Psoas muscle (tissue), 8 donors: ENCODE measurements at regions of chr11 and their contacts with region 1.

Region 1: DNA sequence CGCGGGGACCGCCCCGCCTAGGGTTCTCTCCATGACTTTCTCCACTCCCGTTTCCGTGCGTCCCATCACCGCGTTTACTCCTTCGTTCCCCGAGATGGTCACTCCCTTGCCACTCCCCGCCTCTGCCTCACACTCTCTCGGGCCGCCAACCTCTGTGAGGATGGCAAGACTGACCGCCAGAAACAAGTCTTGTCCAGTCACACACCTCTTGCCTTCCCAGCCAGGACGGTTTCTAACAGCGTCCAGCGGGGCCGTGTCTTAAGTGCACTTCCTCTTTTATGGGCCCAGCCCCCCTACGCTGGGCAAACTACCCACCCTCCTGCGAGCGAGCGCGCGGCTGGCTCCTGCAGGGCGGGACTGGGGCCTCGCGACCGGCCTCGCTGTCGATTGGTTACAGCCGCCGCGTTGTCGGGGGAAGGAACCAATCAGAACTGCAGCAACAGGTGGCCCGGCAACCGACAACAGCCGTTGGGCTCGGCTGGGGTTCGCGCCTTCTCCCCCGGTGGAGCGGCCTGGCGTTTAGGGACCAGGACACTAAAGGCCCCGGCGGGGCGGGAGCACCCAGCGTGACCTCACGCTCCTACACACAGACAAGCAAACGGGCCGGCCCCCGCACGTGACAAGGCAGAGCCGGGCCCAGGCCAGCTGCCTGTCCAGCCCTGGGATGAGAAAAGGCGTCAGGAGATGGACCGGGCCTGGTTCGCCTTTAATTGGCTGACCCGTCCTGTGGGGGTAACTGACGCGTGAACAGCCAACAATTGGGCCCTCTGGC is 512 bp upstream of the UCP2 start:
- DNase-seq: peak; percentile 94 to 96
- ATAC-seq: peak; percentile 88 to 90 (median 89)
- H3K4me3 ChIP-seq: peak overlapping the region; percentile 71
- H3K27ac ChIP-seq: peak overlapping the region; percentile 92
- H3K4me1 ChIP-seq: peaks cover 25% of the 10 kb centered on the region
- H3K27me3 ChIP-seq: no peaks in the 10 kb centered on the region
- CTCF ChIP-seq: no peak

Region 2: DNA sequence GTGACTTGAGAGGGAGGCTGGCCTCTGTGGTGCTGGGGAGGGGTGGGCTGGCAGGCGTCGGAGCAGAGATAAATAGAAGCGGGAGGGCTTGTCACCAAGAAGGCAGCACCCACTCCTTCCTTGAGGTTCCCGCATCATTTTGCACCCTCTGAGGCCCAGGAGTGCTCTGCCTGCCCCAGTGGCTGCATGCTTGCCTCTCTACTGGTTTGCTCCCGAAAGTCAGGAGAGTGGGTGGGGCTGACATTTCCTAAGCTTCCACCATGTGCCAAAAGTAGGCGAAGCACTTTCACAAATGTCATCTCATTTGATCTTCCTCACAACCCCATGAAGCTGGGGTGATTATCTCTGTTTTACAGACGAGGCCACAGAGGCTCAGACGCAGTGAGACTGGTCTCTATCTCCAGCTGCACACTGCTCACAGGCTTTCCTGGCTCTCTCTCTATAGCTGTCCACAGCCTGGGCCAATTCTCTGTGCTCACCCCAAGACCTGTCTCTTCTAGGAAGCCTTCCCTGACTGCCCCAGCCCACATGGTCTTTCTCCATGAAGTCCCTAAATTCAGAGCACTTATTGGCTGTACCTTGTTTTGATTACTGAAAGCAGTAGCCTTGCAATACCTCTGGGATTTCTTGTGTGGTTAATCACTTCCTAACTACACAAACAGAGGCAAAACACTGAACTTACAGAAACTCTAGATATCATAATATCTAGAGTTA is 28.4 kb after region 1 on chr11:
- intact Hi-C with region 1: loop called in 1 of 2 experiments (anchors 1 kb)
- DNase-seq: no peak
- ATAC-seq: no peak
- H3K4me3 ChIP-seq: no peak overlapping the region
- H3K27ac ChIP-seq: peak overlapping the region; percentile 98
- H3K4me1 ChIP-seq: peaks cover 28% of the 10 kb centered on the region
- H3K27me3 ChIP-seq: no peaks in the 10 kb centered on the region
- CTCF ChIP-seq: no peak

Region 3: GRCh38 chr11:74024261-74025029 is 41.3 kb after region 1 on chr11:
- intact Hi-C with region 1: loop called in 1 of 2 experiments (anchors 5 kb)
- DNase-seq: peak; percentile 81 to 83
- ATAC-seq: peak in 3 of 4 donors; percentile 63 to 71 (median 66)
- H3K4me3 ChIP-seq: no peak overlapping the region
- H3K27ac ChIP-seq: peak overlapping the region; percentile 33
- H3K4me1 ChIP-seq: peaks cover 33% of the 10 kb centered on the region
- H3K27me3 ChIP-seq: no peaks in the 10 kb centered on the region
- CTCF ChIP-seq: no peak